ENCODE measurements at regions of chr19 and their contacts with region 1.

Region 1: GRCh38 chr19:53808710-53809125 is 15.4 kb downstream of the NLRP12 start:
- DNase-seq: peak; percentile 62
- H3K4me3 ChIP-seq: no peak overlapping the region
- H3K27ac ChIP-seq: no peak overlapping the region
- H3K4me1 ChIP-seq: no peaks in the 10 kb centered on the region
- H3K27me3 ChIP-seq: no peaks in the 10 kb centered on the region
- CTCF ChIP-seq: peak; percentile 64

Region 2: DNA sequence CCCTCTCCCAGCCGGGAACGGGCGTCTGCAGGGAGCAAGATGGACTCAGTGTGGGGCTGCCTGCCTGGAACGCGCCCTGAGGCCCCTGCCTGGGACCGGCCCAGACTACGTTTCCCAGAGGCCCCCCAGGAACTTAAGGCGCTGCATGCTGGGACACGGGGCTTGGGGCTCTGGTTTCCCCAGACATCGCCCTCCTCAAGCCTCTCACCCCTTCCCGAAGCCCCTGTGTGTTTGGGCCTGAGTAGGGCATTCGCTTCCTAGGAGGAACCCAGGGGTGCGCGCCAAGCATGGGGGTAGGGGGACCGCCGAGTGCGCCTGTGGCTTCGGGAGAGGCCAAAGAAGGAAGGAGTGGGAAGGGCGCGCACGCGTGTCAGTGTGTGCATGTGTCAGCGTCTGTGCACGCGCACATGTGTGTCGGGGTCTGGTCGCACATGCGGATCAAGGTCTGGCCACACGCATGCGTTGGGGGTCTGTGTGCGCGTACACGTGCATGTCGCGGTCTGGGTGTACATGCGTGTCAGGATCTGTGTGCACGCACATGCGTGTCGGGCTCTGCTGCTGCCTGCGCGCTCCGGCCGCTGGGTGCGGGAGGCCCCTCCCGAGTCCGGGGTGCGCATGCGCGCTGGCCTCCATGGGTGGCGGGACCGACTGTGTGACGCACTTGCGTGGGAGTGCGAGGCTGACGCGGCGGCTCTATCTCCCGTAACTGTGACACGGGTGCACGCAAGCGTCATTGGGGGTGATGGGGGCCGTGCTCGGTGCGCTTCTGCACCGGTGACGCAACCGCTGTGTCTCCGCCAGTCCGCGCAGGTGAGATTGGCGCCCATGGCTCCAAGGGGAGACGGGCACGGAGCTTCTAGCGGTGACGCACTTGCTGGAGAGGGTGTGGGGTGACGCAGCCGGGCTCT is 254.6 kb before region 1 on chr19:
- CTCF ChIA-PET with region 1: no interaction called
- POLR2A ChIA-PET with region 1: no interaction called
- intact Hi-C with region 1: no loop called
- DNase-seq: peak; percentile 87
- H3K4me3 ChIP-seq: peak overlapping the region; percentile 61
- H3K27ac ChIP-seq: peak overlapping the region; percentile 87
- H3K4me1 ChIP-seq: no peaks in the 10 kb centered on the region
- H3K27me3 ChIP-seq: no peaks in the 10 kb centered on the region
- CTCF ChIP-seq: no peak

Region 3: DNA sequence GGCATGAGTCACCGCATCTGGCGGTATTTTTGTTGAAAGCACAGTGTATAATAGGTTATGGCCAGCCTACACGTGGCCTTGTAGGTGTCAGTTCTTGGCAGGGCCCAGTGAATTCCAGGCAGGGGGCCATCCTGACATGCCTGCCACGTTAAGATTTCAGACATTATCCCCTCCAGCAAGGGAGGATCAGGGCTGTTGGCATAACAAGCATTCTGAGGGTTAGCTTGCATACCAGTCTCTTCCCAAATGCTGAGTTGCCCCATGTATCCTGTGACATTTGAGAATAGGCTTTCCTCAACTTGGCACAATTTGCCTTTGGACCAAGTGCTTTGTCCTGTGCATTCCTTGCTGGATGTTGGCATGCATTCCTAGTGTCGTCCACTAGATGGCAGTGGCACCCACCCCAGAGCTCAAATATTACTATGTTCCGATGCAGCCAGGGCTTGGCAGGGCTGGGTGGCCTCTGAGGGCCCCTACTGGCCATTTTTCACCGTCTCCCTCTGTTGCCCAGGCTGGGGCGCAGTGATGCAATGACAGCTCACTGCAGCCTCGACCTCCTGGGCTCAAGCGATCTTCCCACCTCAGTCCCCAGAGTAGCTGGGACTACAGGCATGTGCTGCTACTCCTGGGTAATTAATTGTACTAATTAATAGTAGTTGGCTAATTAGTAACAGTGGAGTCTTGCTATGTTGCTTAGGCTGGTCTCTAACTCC is 15.8 kb before region 1 on chr19:
- CTCF ChIA-PET with region 1: interaction called, 12 read pairs
- POLR2A ChIA-PET with region 1: no interaction called
- intact Hi-C with region 1: no loop called
- DNase-seq: peak; percentile 92
- H3K4me3 ChIP-seq: no peak overlapping the region
- H3K27ac ChIP-seq: no peak overlapping the region
- H3K4me1 ChIP-seq: no peaks in the 10 kb centered on the region
- H3K27me3 ChIP-seq: no peaks in the 10 kb centered on the region
- CTCF ChIP-seq: peak; percentile 99

Region 4: DNA sequence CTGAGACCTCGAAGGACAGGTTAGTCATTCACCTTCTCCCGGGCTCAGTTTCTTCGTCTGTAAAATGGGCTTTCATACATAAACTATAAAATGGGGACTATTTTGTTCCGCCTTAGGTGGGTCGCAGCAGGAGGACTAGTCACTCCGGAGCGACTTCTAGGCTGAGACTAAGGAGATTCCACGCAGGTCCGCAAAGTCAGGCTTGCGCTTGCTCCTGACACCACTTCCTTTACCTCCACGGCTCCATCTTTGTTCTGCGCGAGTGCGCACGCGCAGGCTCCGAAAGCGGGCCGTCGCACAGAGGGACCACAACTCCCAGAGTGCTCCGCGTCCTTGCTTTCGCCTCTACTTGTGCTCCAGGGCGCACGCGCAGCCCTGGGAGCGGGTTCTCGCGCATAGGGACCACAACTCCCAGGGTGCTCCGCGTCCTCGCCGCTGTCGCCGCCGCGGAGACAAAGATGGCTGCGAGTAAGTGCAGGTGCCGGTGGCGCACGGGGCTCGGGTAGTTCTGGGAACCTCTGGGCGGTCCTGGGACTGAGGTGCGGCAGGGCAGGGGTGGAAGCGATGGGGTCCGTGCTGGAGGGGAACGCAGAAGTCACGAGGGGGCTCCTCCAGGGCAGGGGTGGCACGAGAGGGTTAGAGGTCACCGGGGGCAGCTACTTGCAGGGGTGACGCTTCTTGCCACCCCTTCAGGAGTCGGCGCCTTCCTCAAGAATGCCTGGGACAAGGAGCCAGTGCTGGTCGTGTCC is 293.9 kb after region 1 on chr19 and contains the start of gene NDUFA3:
- CTCF ChIA-PET with region 1: no interaction called
- POLR2A ChIA-PET with region 1: no interaction called
- intact Hi-C with region 1: no loop called
- DNase-seq: peak; percentile 99
- H3K4me3 ChIP-seq: peak within 1 kb of the TSS; percentile 75
- H3K27ac ChIP-seq: peak within 1 kb of the TSS; percentile 77
- H3K4me1 ChIP-seq: no peaks in the 10 kb centered on the region
- H3K27me3 ChIP-seq: no peaks in the 10 kb centered on the region
- CTCF ChIP-seq: no peak
- total RNA-seq, gene NDUFA3: 144 and 148 TPM in 2 replicates

Region 5: GRCh38 chr19:54168174-54168917 is 359.6 kb after region 1 on chr19:
- CTCF ChIA-PET with region 1: interaction called, 12 read pairs
- POLR2A ChIA-PET with region 1: no interaction called
- intact Hi-C with region 1: no loop called
- DNase-seq: peak; percentile 93
- H3K4me3 ChIP-seq: no peak overlapping the region
- H3K27ac ChIP-seq: no peak overlapping the region
- H3K4me1 ChIP-seq: peaks cover 11% of the 10 kb centered on the region
- H3K27me3 ChIP-seq: no peaks in the 10 kb centered on the region
- CTCF ChIP-seq: peak; percentile 91

Measured in A673 (cell line).